WTC11 (cell line): ENCODE measurements at regions of chr1 and their contacts with region 1.

Region 1: GRCh38 chr1:204363335-204364124 is 3.8 kb upstream of the PLEKHA6 start:
- DNase-seq: peak; percentile 73
- ATAC-seq: peak; percentile 43
- H3K4me3 Mint-ChIP-seq: peak overlapping the region; percentile 56
- H3K27ac Mint-ChIP-seq: no peak overlapping the region
- H3K4me1 Mint-ChIP-seq: peaks cover 19% of the 10 kb centered on the region
- H3K27me3 Mint-ChIP-seq: peaks cover 20% of the 10 kb centered on the region
- CTCF ChIP-seq: peak; percentile 98

Region 2: GRCh38 chr1:204263254-204263910 is 100.1 kb before region 1 on chr1:
- CTCF ChIA-PET with region 1: interaction called, 97 read pairs
- POLR2A ChIA-PET with region 1: no interaction called
- DNase-seq: no peak
- ATAC-seq: no peak
- H3K4me3 Mint-ChIP-seq: no peak overlapping the region
- H3K27ac Mint-ChIP-seq: no peak overlapping the region
- H3K4me1 Mint-ChIP-seq: no peaks in the 10 kb centered on the region
- H3K27me3 Mint-ChIP-seq: no peaks in the 10 kb centered on the region
- CTCF ChIP-seq: no peak

Region 3: DNA sequence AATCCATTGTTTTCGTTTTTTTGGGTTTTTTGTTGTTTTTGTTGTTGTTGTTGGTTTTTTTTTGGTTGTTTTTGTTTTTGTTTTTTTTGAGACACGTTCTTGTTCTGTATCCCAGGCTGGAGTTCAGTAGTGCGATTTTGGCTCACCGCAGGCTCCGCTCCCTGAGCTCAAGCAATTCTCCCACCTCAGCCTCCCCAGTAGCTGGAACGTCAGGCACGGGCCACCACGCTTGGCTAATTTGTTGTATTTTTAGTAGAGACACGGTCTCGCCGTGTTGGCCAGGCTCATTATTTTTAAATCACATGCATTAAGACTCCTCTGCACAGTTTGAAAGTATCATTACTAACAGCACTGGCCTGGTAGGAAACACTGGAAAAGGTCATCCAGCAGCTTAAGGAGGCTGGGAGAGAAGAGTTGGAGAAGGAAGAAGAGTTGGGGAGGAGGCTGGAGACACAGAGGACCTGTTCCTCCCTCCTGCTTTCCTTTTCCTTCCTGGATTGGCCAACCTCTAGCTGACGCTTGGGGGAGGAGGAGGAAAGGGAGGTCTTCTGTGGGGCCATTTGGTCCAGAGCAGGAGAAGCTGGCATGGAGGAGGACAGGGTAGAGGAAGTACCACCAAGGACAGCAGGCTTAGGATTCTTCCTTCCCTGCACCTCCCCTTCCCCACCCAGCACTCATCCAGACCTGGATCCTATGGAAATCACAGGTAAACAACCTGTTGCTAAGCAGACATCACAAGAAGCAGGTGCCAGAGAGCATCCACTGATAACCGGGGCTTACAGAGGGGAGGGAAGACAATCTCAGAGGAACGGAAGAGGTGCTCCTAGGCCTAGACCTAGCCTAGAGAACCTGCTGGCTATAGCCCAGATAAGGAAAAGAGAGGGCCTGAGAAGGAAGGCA is 77.9 kb before region 1 on chr1:
- CTCF ChIA-PET with region 1: interaction called, 18 read pairs
- POLR2A ChIA-PET with region 1: no interaction called
- DNase-seq: no peak
- ATAC-seq: no peak
- H3K4me3 Mint-ChIP-seq: no peak overlapping the region
- H3K27ac Mint-ChIP-seq: no peak overlapping the region
- H3K4me1 Mint-ChIP-seq: peaks cover 34% of the 10 kb centered on the region
- H3K27me3 Mint-ChIP-seq: no peaks in the 10 kb centered on the region
- CTCF ChIP-seq: no peak

Region 4: GRCh38 chr1:204350857-204351573 is 12.5 kb before region 1 on chr1:
- CTCF ChIA-PET with region 1: interaction called, 16 read pairs
- POLR2A ChIA-PET with region 1: no interaction called
- DNase-seq: peak; percentile 94
- ATAC-seq: peak; percentile 79
- H3K4me3 Mint-ChIP-seq: peak overlapping the region; percentile 51
- H3K27ac Mint-ChIP-seq: peak overlapping the region; percentile 54
- H3K4me1 Mint-ChIP-seq: peaks cover 32% of the 10 kb centered on the region
- H3K27me3 Mint-ChIP-seq: no peaks in the 10 kb centered on the region; the same call in 1 of the 2 replicates
- CTCF ChIP-seq: no peak